Thyroid gland (tissue), 4 donors: ENCODE measurements at regions of chr5 and their contacts with region 1.

Region 1: GRCh38 chr5:170745481-170746071 is 37.9 kb upstream of the GABRP start:
- DNase-seq: peak; percentile 52 to 65
- H3K4me3 ChIP-seq: no peak overlapping the region
- H3K27ac ChIP-seq: peak overlapping the region in 2 of 3 donors; percentile 25 to 56
- H3K4me1 ChIP-seq: peaks cover 21 to 37% of the 10 kb centered on the region in 2 donors
- H3K27me3 ChIP-seq: no peaks in the 10 kb centered on the region
- CTCF ChIP-seq: no peak
- POLR2A ChIP-seq: no peak

Region 2: DNA sequence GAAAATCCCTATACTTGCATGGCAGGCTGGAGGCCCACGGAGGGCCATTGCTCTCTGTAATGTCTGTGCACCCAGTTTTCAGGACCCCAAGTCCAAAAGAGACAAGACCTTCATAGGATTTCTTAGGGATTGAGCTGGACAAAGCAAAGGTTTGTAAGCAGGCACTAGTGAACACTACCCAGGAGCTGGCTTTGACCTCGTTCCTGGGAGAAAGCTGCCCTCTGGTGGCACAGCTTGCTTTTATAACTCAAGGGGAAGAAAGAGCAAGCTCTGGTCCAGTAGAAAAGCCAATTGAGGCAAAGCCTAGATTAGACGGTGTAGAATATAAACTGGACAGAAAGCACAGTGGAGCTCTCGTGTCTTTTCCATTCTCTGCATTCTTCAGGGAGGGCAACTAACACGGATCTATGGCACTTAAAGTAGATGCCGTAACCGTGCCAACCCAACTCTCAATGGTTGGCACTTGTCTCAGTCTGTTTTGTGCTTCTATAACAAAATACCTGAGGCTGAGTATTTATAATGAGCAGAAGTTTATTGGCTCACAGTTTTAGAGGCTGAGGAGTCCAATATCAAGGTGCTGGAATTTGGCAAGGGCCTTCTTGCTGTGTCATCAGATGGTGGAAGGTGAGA is 45.9 kb after region 1 on chr5:
- intact Hi-C with region 1: loop called (anchors 2 kb)
- DNase-seq: peak; percentile 82 to 89
- H3K4me3 ChIP-seq: no peak overlapping the region
- H3K27ac ChIP-seq: no peak overlapping the region
- H3K4me1 ChIP-seq: peaks cover 9 to 11% of the 10 kb centered on the region in 2 donors
- H3K27me3 ChIP-seq: no peaks in the 10 kb centered on the region
- CTCF ChIP-seq: peak in 5 of 6 experiments; percentile 30 to 92 (median 76)
- POLR2A ChIP-seq: no peak